Head of caudate nucleus (tissue), 42 donors: ENCODE measurements at regions of chr17 and their contacts with region 1.

Region 1: DNA sequence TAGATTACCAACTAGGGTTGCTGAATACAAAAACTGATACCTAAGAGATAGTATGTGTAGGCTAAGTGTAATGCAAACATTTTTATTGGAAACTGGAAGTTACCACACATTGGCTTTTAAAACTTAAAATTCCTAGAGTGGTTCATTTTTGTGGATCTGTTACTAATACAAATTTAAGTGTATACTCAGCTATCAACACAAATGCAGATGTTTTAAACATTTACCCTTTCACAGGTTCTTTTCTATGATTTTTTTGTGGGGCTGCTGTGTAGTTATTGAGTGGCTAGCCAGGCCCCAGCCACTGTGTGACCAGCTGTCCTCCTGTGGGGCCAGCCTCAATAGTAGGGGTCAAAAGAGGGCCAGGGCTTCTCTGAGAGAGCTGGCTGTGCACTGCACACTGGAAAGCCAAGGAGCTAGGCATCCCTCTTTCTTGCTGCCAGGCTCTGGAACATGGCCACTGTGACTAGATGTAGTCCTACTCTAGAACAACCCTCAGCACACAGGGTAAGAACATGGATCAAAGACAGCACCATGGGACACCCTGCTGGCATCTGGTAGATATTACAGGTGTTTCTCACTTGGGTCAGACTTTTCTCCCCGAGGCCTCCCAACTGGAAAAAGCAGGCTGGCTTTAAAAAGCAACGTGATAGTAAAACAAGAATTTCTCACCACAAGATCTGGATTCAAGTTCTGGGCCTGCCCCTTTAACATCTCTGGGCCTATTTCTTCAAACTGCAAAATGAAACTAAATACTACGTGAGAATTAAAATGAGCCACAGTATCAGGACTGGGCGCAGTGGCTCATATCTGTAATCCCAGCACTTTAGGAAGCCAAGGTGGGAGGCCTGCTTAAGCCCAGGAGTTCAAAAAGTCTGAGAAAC is 7.3 kb upstream of the VEZF1 start:
- DNase-seq: peak; percentile 9 to 88 (median 73)

Region 2: DNA sequence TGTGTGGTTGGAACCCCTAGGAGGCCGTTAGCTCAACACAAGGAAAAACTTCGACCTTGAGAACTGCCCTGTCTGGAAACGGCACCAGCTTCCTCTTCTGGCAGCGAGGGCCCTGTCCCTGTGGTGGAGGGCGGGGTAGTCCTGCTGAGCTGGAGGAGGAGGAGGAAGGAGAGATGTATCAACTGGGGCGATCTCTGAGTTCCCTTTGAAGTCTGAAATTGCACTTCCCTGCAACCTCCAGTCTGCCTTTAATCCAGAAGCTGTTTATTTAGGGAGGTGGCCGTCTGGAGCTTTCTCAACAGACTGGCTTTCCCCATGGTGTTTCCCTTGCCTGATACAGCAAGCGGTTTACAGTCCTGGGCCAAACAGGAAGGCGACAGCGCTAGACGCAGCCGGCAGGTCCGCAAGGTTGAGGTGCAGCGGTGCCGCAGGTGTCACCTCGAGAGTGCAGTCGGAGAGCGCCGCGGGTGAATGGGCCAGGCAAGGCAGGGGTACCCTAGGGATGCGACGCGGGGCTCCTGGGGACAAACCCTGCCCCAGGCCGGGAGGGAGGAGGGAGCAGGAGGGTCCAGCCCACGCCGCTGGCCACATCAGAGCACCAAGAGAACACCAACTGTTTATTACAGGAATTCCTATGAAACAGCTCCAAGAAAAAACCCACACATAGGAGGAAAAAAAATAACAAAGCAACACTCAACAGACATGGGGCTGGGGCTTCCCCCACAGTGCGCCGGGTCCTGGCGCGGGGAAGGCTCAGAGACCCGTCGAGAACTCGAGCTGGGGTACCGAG is 134.1 kb before region 1 on chr17:
- intact Hi-C with region 1: loop called (anchors 5 kb)
- DNase-seq: peak in 14 of 42 donors; percentile 25 to 75 (median 53)

Region 3: DNA sequence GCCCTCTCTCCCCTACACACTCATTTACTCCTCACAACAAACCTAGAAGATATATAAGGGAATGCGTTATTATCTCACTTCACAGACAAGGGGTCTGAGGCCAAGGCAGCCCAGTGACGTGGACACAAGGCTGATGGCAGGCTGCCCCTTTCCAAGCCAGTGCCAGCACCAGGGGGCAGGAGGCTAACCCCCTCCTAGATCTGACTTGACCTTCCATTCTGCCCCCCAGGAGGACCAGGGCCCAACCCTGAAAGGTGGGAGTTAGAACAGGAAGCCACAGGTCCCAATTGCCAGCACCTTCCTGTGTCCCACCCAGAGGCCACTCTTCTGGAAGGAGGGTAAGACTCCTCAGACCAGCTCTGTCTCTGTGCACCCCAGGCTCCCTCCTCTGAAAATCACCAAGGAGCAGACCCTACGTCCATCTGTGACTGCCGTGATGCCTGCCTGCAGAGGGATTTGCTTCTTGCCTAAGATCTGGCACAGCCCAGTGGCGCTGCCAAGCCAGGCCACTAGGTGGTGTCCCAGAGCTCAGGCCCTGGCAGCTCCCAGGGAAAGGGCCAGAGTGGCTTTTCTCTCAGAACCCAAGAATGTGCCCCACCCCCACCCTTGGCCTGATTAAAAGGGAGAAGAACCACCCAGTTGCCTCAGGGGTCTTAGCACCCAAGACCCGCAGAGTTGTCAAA is 103.0 kb before region 1 on chr17:
- intact Hi-C with region 1: loop called (anchors 2 kb)
- DNase-seq: peak; percentile 55 to 94 (median 85)